Activated CD4-positive, alpha-beta memory T cell treated with anti-CD3 and anti-CD28 coated beads for 36 hours (primary cell): ENCODE measurements at regions of chr4 and their contacts with region 1.

Region 1: DNA sequence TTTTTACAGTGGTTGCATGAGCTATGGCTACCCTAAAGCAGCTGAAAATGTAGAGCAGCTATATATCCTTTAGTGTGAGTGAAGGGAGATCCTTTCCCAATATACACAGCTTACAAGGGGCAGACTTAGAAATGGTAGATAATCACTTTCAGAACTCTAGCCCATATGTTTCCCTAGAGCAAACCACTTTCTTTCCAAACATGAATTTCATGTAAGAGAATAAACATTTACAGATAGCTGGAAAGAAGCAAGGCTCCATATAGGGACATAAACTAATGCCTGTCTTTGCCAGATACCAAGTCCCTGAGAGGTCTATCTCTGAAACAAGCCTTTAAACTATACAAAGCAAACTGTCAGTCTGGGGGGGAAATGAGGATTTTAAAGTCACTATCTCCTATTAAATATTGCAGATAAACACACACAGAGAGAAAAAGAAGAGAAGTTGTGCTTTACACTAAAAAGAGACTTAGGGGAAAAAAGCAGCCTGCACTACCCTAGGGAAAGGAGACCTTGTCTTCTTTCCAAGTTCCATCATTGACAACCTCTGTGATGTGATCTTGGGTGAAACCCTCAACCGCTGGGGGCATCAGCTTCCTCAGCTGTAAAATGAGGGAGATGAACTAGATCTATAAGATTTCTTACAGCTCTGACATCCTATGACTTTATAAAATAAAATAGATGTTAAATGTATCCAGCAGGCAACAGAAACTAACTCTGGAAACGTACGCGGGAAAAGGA is 73.6 kb downstream of the TMEM156 start:
- DNase-seq: no peak
- H3K4me3 Mint-ChIP-seq: no peak overlapping the region
- H3K27ac Mint-ChIP-seq: peak overlapping the region; percentile 97
- H3K4me1 Mint-ChIP-seq: peaks cover 43% of the 10 kb centered on the region
- H3K27me3 Mint-ChIP-seq: peaks cover under 1% of the 10 kb centered on the region

Region 2: GRCh38 chr4:38939165-38939564 is 19.5 kb before region 1 on chr4:
- CTCF ChIA-PET with region 1: no interaction called
- POLR2A ChIA-PET with region 1: interaction called, 8 read pairs
- intact Hi-C with region 1: loop called (anchors 1 kb)
- DNase-seq: no peak
- H3K4me3 Mint-ChIP-seq: no peak overlapping the region
- H3K27ac Mint-ChIP-seq: peak overlapping the region; percentile 68
- H3K4me1 Mint-ChIP-seq: peaks cover 41% of the 10 kb centered on the region
- H3K27me3 Mint-ChIP-seq: no peaks in the 10 kb centered on the region

Region 3: DNA sequence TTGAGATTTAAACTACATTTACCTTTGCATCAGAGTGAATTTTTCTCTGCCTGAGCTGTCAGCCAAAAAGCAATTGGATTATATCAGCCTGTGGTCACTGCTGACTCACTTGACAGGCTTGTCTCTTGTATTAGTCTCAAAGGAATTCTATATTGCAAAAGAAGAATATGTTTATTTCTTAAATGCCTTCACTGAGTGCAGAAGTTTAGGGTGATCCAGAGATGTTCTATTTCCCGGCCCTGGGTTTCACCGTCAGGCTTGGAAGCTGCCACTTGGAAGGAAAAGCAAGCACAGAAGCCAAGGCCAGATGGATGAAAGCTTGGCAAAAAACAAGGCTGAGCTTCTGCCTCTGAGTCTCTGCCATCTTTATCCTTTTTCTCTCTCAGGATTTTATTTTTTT is 10.1 kb before region 1 on chr4:
- CTCF ChIA-PET with region 1: interaction called, 8 read pairs
- POLR2A ChIA-PET with region 1: interaction called, 12 read pairs
- intact Hi-C with region 1: loop called (anchors 1 kb)
- DNase-seq: no peak
- H3K4me3 Mint-ChIP-seq: no peak overlapping the region
- H3K27ac Mint-ChIP-seq: peak overlapping the region; percentile 82
- H3K4me1 Mint-ChIP-seq: peaks cover 52% of the 10 kb centered on the region
- H3K27me3 Mint-ChIP-seq: peaks cover under 1% of the 10 kb centered on the region

Region 4: DNA sequence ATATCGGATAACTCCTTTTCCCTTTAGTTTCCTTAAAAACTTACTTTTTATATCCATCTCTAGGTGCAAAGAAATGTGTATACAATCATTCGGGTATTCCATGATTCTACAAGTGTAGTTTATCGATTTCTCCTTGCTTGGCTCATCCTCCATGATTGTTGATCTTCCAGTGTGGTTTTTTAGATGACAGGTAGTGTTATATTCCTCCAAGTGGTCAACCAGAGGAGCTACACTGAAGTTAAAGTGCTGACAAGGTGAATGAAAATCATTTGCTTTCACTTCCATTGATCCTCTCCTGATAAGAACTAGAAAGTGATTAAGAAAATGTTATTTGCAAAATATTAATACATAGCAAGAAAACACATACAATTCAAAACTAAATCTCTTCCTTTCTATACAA is 35.1 kb after region 1 on chr4:
- CTCF ChIA-PET with region 1: no interaction called
- POLR2A ChIA-PET with region 1: no interaction called
- intact Hi-C with region 1: no loop called
- DNase-seq: no peak
- H3K4me3 Mint-ChIP-seq: no peak overlapping the region
- H3K27ac Mint-ChIP-seq: no peak overlapping the region
- H3K4me1 Mint-ChIP-seq: peaks cover 10% of the 10 kb centered on the region
- H3K27me3 Mint-ChIP-seq: no peaks in the 10 kb centered on the region

Region 5: GRCh38 chr4:39908284-39908683 is 949.7 kb after region 1 on chr4:
- CTCF ChIA-PET with region 1: no interaction called
- POLR2A ChIA-PET with region 1: no interaction called
- intact Hi-C with region 1: no loop called
- DNase-seq: no peak
- H3K4me3 Mint-ChIP-seq: no peak overlapping the region
- H3K27ac Mint-ChIP-seq: no peak overlapping the region
- H3K4me1 Mint-ChIP-seq: peaks cover 6% of the 10 kb centered on the region
- H3K27me3 Mint-ChIP-seq: no peaks in the 10 kb centered on the region